Gastrocnemius medialis (tissue), 4 donors: ENCODE measurements at regions of chr11 and their contacts with region 1.

Region 1: GRCh38 chr11:120391292-120391691 is 55.1 kb downstream of the ARHGEF12 start:
- DNase-seq: no peak
- ATAC-seq: peak in 1 of 2 donors; percentile 28
- H3K4me3 ChIP-seq: no peak overlapping the region
- H3K27ac ChIP-seq: peak overlapping the region; percentile 74 to 79 (median 77)
- H3K4me1 ChIP-seq: peaks cover 59 to 62% of the 10 kb centered on the region in 2 donors
- H3K27me3 ChIP-seq: no peaks in the 10 kb centered on the region
- CTCF ChIP-seq: no peak
- POLR2A ChIP-seq: no peak

Region 2: GRCh38 chr11:120160436-120160835 is 230.9 kb before region 1 on chr11:
- in situ Hi-C with region 1: no loop called
- intact Hi-C with region 1: no loop called
- DNase-seq: no peak
- ATAC-seq: no peak
- H3K4me3 ChIP-seq: no peak overlapping the region
- H3K27ac ChIP-seq: no peak overlapping the region
- H3K4me1 ChIP-seq: no peaks in the 10 kb centered on the region
- H3K27me3 ChIP-seq: peaks cover 0 to 6% (median 0%) of the 10 kb centered on the region in 3 donors
- CTCF ChIP-seq: no peak
- POLR2A ChIP-seq: no peak

Region 3: DNA sequence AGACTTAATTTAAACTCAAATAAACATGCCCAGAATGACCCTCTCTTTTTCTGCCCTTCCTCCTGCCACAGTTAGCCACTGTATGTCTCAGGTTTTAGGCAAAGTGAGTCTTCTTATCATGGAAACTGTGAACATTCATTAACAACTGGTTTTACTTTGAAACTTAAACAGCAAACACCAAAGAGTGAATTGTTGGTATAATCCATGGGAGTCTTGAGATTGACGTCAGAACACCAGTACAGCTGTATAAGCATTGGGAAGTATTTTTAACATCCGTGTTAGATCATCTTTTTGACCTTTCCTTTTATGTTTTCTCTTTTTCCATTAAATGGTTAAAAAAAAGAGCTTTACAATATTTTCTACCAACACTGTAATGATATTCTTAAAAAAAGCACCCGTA is 16.2 kb before region 1 on chr11:
- in situ Hi-C with region 1: no loop called
- intact Hi-C with region 1: loop called (anchors 2 kb)
- DNase-seq: no peak
- ATAC-seq: no peak
- H3K4me3 ChIP-seq: no peak overlapping the region
- H3K27ac ChIP-seq: peak overlapping the region; percentile 18 to 68 (median 26)
- H3K4me1 ChIP-seq: peaks cover 50 to 52% of the 10 kb centered on the region in 2 donors
- H3K27me3 ChIP-seq: no peaks in the 10 kb centered on the region
- CTCF ChIP-seq: no peak
- POLR2A ChIP-seq: no peak

Region 4: DNA sequence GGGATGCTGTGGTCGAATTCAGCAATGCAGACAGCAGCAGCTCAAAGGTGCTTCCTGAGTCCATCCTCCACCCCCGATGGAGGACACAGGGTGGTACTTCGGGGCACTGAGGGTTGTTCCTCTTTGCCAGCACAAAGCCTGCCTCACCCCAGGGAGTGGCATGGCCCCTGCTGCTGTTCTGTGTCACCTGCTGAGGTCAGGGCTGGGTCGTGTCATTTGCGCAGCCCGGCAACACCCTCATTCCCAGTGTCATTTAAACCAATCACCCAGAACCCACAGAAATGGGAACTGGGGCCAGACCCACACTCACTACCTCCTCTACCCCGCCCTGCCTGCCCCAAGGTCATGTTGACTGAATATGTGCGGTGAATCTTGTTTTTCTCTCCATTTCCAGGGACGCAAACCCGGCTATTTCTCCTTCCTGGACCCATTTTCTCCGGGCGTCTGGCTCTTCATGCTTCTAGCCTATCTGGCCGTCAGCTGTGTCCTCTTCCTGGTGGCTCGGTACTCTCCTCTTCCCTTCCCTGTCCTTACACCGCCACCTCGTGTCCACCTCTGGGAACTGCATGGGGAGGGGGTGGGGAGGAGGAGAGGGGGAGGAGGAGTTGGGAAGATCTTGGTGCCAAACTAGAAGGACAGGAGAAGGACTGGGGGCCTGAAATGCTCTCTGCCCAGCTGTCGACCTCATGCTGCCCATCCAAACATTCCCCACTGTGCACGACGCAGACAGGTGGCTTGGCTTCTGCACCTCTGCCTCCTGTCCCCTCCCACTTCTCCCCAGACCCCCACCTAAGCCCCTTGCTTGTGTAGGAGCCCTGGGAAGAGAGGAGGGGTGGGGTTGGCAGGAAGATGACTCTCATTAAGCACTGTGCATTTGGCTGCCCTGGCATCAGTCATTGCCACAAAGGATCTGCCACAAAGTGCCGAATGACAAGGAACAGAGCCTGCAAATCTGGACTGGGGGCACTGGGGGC is 561.5 kb after region 1 on chr11:
- in situ Hi-C with region 1: no loop called
- intact Hi-C with region 1: no loop called
- DNase-seq: peak; percentile 35 to 57
- ATAC-seq: peak; percentile 86 to 87
- H3K4me3 ChIP-seq: peak overlapping the region in 2 of 4 donors; percentile 22 to 50
- H3K27ac ChIP-seq: no peak overlapping the region
- H3K4me1 ChIP-seq: peaks cover 0 to 5% of the 10 kb centered on the region in 2 donors
- H3K27me3 ChIP-seq: peaks cover 6 to 10% (median 10%) of the 10 kb centered on the region in 3 donors
- CTCF ChIP-seq: peak; percentile 44 to 74 (median 51)
- POLR2A ChIP-seq: no peak